Naive thymus-derived CD4-positive, alpha-beta T cell (primary cell): ENCODE measurements at regions of chr19 and their contacts with region 1.

Region 1: GRCh38 chr19:17125715-17126677 is 50.4 kb downstream of the MYO9B start:
- DNase-seq: peak; percentile 58 to 87 (median 83)
- ATAC-seq: peak; percentile 91
- H3K4me3 ChIP-seq: peak overlapping the region; percentile 71
- H3K4me3 Mint-ChIP-seq: peak overlapping the region; percentile 81 to 95 (median 86)
- H3K27ac ChIP-seq: peak overlapping the region; percentile 95
- H3K27ac Mint-ChIP-seq: peak overlapping the region; percentile 90 to 100 (median 99)
- H3K4me1 ChIP-seq: peaks cover 33 to 41% of the 10 kb centered on the region in 2 donors
- H3K4me1 Mint-ChIP-seq: peaks cover 18 to 71% (median 50%) of the 10 kb centered on the region in 7 donors
- H3K27me3 ChIP-seq: no peaks in the 10 kb centered on the region
- H3K27me3 Mint-ChIP-seq: no peaks in the 10 kb centered on the region

Region 2: GRCh38 chr19:17107525-17108452 is 18.2 kb before region 1 on chr19:
- CTCF ChIA-PET with region 1: interaction called, 9 read pairs
- POLR2A ChIA-PET with region 1: interaction called, 11 read pairs
- intact Hi-C with region 1: loop called in 1 of 2 experiments (anchors 2 kb)
- DNase-seq: no peak
- ATAC-seq: peak; percentile 84
- H3K4me3 ChIP-seq: no peak overlapping the region
- H3K4me3 Mint-ChIP-seq: no peak overlapping the region
- H3K27ac ChIP-seq: no peak overlapping the region
- H3K27ac Mint-ChIP-seq: peak overlapping the region in 2 of 9 donors; percentile 16 to 38
- H3K4me1 ChIP-seq: peaks cover 0 to 8% of the 10 kb centered on the region in 2 donors
- H3K4me1 Mint-ChIP-seq: peaks cover 21 to 52% (median 33%) of the 10 kb centered on the region in 7 donors
- H3K27me3 ChIP-seq: no peaks in the 10 kb centered on the region
- H3K27me3 Mint-ChIP-seq: no peaks in the 10 kb centered on the region

Region 3: GRCh38 chr19:17235618-17236377 is 109.8 kb after region 1 on chr19:
- CTCF ChIA-PET with region 1: no interaction called
- POLR2A ChIA-PET with region 1: interaction called, 7 read pairs
- intact Hi-C with region 1: loop called in 1 of 2 experiments (anchors 2 kb)
- DNase-seq: peak; percentile 62 to 75 (median 73)
- ATAC-seq: peak; percentile 95
- H3K4me3 ChIP-seq: peak overlapping the region; percentile 74
- H3K4me3 Mint-ChIP-seq: peak overlapping the region in 9 of 10 donors; percentile 49 to 88 (median 83)
- H3K27ac ChIP-seq: peak overlapping the region; percentile 64
- H3K27ac Mint-ChIP-seq: peak overlapping the region in 1 of 9 donors; percentile 23
- H3K4me1 ChIP-seq: peaks cover 0 to 11% of the 10 kb centered on the region in 2 donors
- H3K4me1 Mint-ChIP-seq: peaks cover 4 to 22% (median 16%) of the 10 kb centered on the region in 7 donors
- H3K27me3 ChIP-seq: no peaks in the 10 kb centered on the region
- H3K27me3 Mint-ChIP-seq: no peaks in the 10 kb centered on the region

Region 4: DNA sequence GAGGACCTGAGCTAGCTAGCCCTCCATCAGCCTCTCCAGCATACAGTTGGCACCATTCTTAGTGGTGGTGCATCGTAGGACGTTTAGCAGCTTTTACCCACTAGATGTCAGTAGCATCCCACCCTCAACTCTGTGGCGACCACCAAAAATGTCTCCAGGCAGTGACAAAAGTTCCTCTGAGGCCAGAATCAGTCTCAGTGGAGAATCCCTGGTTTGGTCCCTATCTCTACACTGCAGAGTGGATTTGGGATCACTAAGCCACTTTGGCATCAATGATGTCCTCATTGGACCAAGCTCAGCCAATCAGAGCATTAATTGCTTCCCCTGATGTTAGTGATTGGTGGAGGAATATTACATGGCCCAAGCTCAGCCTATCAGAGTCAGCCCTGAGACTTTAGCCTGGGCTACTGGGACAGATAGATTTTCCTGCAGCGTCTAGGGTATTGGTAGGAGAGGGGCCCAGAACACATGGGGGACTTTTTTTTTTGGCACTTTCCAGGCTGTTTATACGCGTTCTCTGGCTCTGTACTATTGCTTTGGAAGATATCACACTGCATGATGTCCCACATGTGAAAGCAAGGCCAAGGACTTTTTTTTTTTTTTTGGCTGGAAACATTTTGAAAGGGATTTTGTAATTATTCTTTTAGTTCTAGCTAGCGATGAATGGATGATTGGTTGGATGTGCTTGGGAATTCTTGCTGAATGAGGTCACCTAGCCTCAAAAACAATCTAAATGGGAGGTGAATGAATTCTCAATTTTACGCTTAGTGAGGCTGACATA is 315.4 kb after region 1 on chr19:
- CTCF ChIA-PET with region 1: no interaction called
- POLR2A ChIA-PET with region 1: no interaction called
- intact Hi-C with region 1: no loop called
- DNase-seq: peak in 3 of 9 donors; percentile 14 to 35 (median 33)
- ATAC-seq: peak; percentile 54
- H3K4me3 ChIP-seq: no peak overlapping the region
- H3K4me3 Mint-ChIP-seq: no peak overlapping the region
- H3K27ac ChIP-seq: no peak overlapping the region
- H3K27ac Mint-ChIP-seq: no peak overlapping the region
- H3K4me1 ChIP-seq: no peaks in the 10 kb centered on the region
- H3K4me1 Mint-ChIP-seq: peaks cover 0 to 1% (median 0%) of the 10 kb centered on the region in 7 donors
- H3K27me3 ChIP-seq: no peaks in the 10 kb centered on the region
- H3K27me3 Mint-ChIP-seq: no peaks in the 10 kb centered on the region